AG04449 (cell line): ENCODE measurements at regions of chr20 and their contacts with region 1.

Region 1: GRCh38 chr20:39049684-39050554 is 87.8 kb downstream of the DHX35 start:
- DNase-seq: no peak
- H3K4me3 ChIP-seq: peak overlapping the region; percentile 91
- CTCF ChIP-seq: peak; percentile 99

Region 2: DNA sequence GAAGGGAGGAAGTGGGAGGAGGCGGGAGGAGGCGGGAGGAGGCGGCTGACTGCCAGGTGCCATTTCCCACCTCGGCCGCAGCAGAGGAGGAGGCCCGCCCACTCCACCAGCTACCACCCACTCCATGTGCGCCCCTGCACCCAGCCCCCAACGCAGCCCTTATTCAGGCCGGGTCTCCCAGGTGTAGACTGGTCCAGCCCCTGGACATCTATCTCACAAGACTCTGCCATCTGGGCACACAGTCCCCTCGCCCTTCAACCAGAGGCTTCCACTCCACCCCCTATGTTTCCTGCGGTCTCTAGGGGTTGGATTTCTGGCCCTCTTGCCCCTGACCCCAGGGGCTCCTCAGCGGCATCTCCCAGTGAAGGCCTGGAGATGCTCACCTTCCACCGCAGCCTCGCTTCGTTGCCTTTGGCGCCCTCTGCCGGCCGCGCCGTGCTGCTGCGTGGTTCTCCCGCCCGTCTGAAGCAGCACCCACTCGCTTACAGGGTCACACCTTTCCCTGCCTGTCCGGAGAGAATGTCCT is 156.3 kb before region 1 on chr20:
- CTCF ChIA-PET with region 1: interaction called, 18 read pairs
- POLR2A ChIA-PET with region 1: no interaction called
- DNase-seq: no peak
- H3K4me3 ChIP-seq: no peak overlapping the region
- CTCF ChIP-seq: peak; percentile 100

Region 3: GRCh38 chr20:38926142-38926933 is 123.6 kb before region 1 on chr20 and contains the start of gene FAM83D:
- CTCF ChIA-PET with region 1: interaction called, 296 read pairs
- POLR2A ChIA-PET with region 1: interaction called, 5 read pairs
- DNase-seq: peak; percentile 87
- H3K4me3 ChIP-seq: peak within 1 kb of the TSS; percentile 79
- CTCF ChIP-seq: no peak

Region 4: GRCh38 chr20:38941726-38942389 is 108.1 kb before region 1 on chr20:
- CTCF ChIA-PET with region 1: interaction called, 13 read pairs
- POLR2A ChIA-PET with region 1: no interaction called
- DNase-seq: no peak
- H3K4me3 ChIP-seq: no peak overlapping the region
- CTCF ChIP-seq: no peak

Region 5: GRCh38 chr20:38979842-38980241 is 70.1 kb before region 1 on chr20:
- CTCF ChIA-PET with region 1: interaction called, 12 read pairs
- POLR2A ChIA-PET with region 1: no interaction called
- DNase-seq: no peak
- H3K4me3 ChIP-seq: no peak overlapping the region
- CTCF ChIP-seq: no peak

Region 6: GRCh38 chr20:39029324-39029820 is 20.5 kb before region 1 on chr20:
- CTCF ChIA-PET with region 1: interaction called, 20 read pairs
- POLR2A ChIA-PET with region 1: no interaction called
- DNase-seq: no peak
- H3K4me3 ChIP-seq: no peak overlapping the region
- CTCF ChIP-seq: no peak